ENCODE measurements at regions of chr10 and their contacts with region 1.

Region 1: DNA sequence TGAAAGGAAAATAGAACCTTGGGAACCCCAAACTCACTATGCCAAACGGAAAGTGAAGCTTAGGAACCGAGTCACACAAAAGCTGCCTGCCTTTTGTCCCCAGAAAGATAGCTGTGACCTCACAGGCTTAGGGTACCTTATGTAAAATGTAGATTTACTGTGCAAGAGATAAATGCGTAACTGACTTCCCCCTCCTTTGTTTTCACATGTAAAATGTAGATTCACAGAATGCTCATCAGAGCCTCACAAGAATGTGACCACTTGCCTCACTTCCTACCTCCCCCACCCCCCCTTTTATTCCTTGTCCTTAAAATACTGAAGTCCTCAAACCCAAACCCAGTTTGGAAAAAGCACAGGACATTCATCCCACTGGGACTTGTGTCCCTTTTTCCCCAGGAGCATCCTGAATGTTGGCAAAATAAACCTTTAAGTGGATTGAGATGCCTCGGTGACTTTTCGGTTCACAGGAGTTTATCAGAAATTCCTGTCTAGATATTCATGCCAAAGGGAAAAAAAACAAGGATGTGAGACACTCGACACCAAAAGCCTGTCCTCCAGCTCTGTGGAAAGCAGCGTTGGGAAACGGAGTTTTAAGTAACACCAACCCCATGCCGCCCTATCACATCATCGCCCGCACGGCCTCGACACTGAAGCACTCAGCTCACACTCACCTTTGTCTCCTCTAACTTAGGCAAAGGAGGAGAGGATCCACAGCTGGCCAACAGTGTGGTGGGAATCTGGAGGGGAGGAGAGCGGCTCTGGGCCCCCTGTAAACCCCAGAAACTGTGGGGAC is 45.9 kb downstream of the SVIL start:
- DNase-seq: no peak
- H3K4me3 ChIP-seq: no peak overlapping the region
- H3K4me3 Mint-ChIP-seq: no peak overlapping the region
- H3K27ac ChIP-seq: no peak overlapping the region
- H3K27ac Mint-ChIP-seq: no peak overlapping the region
- H3K4me1 ChIP-seq: peaks cover 8% of the 10 kb centered on the region
- H3K4me1 Mint-ChIP-seq: peaks cover 12 to 33% (median 16%) of the 10 kb centered on the region in 4 donors
- H3K27me3 ChIP-seq: no peaks in the 10 kb centered on the region
- H3K27me3 Mint-ChIP-seq: no peaks in the 10 kb centered on the region

Region 2: DNA sequence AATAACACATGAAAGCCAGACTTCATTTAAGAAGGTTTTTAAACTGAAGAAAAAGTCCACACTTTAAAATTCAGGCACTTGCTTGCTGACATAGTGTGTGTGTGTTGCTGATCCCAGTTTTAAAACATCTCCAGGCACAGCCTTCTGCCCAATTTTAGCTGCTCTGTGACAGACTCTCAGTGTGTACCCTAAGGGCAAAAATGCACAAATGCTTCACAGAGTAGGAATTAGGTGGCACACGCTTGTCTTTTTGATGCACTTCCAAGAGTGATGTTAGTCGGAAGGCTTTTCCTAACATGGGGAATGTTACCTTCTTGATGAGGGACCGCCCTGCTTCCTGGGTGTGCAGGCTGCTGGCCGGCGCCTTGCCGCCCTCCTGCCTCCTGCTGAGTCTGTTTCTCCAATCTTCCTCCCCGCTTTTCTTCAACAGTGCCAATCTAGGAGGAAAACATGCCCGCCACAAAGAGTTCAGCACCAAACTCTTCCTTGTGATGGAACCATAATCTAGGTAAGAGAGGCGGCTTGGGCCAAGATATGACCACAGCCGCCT is 76.3 kb before region 1 on chr10:
- CTCF ChIA-PET with region 1: interaction called, 10 read pairs
- POLR2A ChIA-PET with region 1: no interaction called
- intact Hi-C with region 1: loop called (anchors 2 kb)
- DNase-seq: no peak
- H3K4me3 ChIP-seq: no peak overlapping the region
- H3K4me3 Mint-ChIP-seq: no peak overlapping the region
- H3K27ac ChIP-seq: no peak overlapping the region
- H3K27ac Mint-ChIP-seq: no peak overlapping the region
- H3K4me1 ChIP-seq: no peaks in the 10 kb centered on the region
- H3K4me1 Mint-ChIP-seq: peaks cover 0 to 4% (median 1%) of the 10 kb centered on the region in 4 donors
- H3K27me3 ChIP-seq: no peaks in the 10 kb centered on the region
- H3K27me3 Mint-ChIP-seq: no peaks in the 10 kb centered on the region

Region 3: DNA sequence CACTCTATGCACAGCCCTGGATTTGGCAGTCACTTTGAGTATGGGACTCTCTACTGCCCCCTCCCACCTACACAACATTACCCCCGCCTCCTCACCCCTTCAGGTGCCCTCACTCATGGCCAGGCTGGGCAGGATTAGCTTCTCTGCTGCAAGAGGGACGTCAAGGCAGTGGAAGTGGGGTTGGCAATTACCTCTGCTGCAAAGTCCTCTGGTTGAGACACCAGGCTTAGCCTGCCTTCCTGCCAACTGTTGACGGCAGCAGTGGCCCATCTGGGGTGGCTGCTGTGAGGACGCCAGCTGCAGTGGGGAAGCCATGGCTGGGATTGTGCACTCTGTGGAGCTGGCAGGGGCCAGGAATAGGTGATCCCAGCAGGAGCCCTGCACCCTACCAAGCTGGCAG is 19.2 kb after region 1 on chr10:
- CTCF ChIA-PET with region 1: interaction called, 17 read pairs
- POLR2A ChIA-PET with region 1: no interaction called
- intact Hi-C with region 1: no loop called
- DNase-seq: no peak
- H3K4me3 ChIP-seq: no peak overlapping the region
- H3K4me3 Mint-ChIP-seq: no peak overlapping the region
- H3K27ac ChIP-seq: no peak overlapping the region
- H3K27ac Mint-ChIP-seq: no peak overlapping the region
- H3K4me1 ChIP-seq: no peaks in the 10 kb centered on the region
- H3K4me1 Mint-ChIP-seq: peaks cover 0 to 8% (median 8%) of the 10 kb centered on the region in 4 donors
- H3K27me3 ChIP-seq: no peaks in the 10 kb centered on the region
- H3K27me3 Mint-ChIP-seq: no peaks in the 10 kb centered on the region

Region 4: DNA sequence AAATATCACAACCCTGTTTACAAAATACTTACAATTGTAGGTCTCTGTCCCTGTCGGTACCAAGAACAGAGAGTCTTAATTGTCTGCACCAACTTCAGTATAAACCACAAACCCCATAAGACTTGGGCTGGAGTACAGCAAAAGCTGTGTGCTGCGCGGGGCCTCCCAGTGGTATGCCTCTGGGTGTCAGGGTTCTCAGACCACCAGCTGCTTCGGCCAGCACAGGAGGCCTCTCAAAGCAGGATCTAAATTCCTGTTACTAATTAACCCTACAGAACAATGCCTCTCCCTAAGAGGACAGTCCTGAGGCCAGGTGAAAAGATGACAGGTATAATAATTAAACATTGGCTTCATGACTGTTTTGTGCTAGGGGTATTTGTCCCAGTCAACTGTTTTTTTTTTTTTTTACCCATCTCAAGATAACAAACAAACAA is 46.9 kb after region 1 on chr10:
- CTCF ChIA-PET with region 1: interaction called, 6 read pairs
- POLR2A ChIA-PET with region 1: no interaction called
- intact Hi-C with region 1: loop called (anchors 5 kb)
- DNase-seq: peak; percentile 43 to 60 (median 55)
- H3K4me3 ChIP-seq: peak overlapping the region in 1 of 2 donors; percentile 11
- H3K4me3 Mint-ChIP-seq: peak overlapping the region; percentile 68 to 83 (median 74)
- H3K27ac ChIP-seq: peak overlapping the region; percentile 67
- H3K27ac Mint-ChIP-seq: peak overlapping the region; percentile 82 to 97 (median 96)
- H3K4me1 ChIP-seq: peaks cover 46% of the 10 kb centered on the region
- H3K4me1 Mint-ChIP-seq: peaks cover 33 to 66% (median 54%) of the 10 kb centered on the region in 4 donors
- H3K27me3 ChIP-seq: no peaks in the 10 kb centered on the region
- H3K27me3 Mint-ChIP-seq: no peaks in the 10 kb centered on the region

Region 5: DNA sequence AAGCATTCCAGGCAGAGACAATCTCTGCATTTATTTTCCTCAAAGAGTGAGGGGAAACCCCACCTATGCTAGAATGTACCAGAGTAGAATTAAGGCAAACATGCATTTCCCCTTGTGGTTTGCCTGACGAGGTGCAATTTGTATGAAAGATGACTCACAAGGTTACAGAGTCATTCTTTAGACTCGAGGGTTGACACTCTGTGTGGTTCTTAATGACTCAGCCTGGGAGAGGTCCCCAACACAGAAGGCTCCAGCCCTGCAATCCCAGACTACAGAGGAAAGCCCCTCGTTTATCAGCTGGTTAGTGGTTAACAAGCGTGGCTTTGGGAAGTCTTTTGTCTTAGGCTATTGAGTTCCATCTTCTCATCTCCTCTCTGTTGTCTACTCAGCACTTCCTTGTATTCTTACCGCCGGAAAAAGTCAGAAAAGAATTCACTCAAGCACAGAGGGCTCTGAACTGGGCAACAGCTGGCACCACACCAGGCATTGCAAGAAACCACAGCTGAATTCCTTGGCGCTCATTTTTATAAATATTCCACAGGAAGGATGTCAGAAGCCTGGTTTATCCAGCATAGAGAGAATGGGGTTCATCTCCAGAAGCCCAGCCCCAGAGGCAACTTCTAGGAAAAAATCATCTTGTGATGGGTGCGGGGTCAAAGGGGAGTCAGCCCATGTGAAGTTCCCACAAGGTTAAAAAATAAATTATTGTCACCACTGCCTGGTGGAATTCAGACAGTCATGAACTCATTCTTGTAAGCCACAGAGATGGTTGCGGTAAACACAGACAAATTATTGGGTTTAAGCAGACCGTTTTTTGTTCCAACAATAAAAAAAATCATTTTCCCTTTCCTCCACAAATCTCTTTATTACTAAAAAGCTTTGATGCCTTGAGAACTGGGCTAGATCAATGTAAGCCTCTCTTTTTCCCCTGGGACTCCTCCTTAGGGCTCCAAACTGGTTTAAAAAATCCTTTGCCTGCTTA is 70.5 kb after region 1 on chr10:
- CTCF ChIA-PET with region 1: interaction called, 3 read pairs
- POLR2A ChIA-PET with region 1: no interaction called
- intact Hi-C with region 1: loop called (anchors 1 kb)
- DNase-seq: peak; percentile 76 to 95 (median 78)
- H3K4me3 ChIP-seq: peak overlapping the region in 1 of 2 donors; percentile 5
- H3K4me3 Mint-ChIP-seq: peak overlapping the region; percentile 60 to 80 (median 69)
- H3K27ac ChIP-seq: peak overlapping the region; percentile 66
- H3K27ac Mint-ChIP-seq: peak overlapping the region; percentile 88 to 96 (median 94)
- H3K4me1 ChIP-seq: peaks cover 33% of the 10 kb centered on the region
- H3K4me1 Mint-ChIP-seq: peaks cover 28 to 53% (median 34%) of the 10 kb centered on the region in 4 donors
- H3K27me3 ChIP-seq: no peaks in the 10 kb centered on the region
- H3K27me3 Mint-ChIP-seq: no peaks in the 10 kb centered on the region

Measured in CD4-positive, alpha-beta memory T cell (primary cell).